ENCODE measurements at regions of chr15 and their contacts with region 1.

Region 1: GRCh38 chr15:60899322-60899966 is 329.7 kb downstream of the RORA start:
- DNase-seq: peak; percentile 80
- H3K4me3 Mint-ChIP-seq: peak overlapping the region; percentile 43
- H3K27ac Mint-ChIP-seq: peak overlapping the region; percentile 82
- H3K4me1 Mint-ChIP-seq: peaks cover 49% of the 10 kb centered on the region
- H3K27me3 Mint-ChIP-seq: peaks cover 4% of the 10 kb centered on the region

Region 2: GRCh38 chr15:60649845-60650548 is 249.4 kb before region 1 on chr15:
- intact Hi-C with region 1: loop called (anchors 1 kb)
- DNase-seq: peak; percentile 86
- H3K4me3 Mint-ChIP-seq: peak overlapping the region; percentile 75
- H3K27ac Mint-ChIP-seq: peak overlapping the region; percentile 86
- H3K4me1 Mint-ChIP-seq: peaks cover 44% of the 10 kb centered on the region
- H3K27me3 Mint-ChIP-seq: no peaks in the 10 kb centered on the region

Region 3: DNA sequence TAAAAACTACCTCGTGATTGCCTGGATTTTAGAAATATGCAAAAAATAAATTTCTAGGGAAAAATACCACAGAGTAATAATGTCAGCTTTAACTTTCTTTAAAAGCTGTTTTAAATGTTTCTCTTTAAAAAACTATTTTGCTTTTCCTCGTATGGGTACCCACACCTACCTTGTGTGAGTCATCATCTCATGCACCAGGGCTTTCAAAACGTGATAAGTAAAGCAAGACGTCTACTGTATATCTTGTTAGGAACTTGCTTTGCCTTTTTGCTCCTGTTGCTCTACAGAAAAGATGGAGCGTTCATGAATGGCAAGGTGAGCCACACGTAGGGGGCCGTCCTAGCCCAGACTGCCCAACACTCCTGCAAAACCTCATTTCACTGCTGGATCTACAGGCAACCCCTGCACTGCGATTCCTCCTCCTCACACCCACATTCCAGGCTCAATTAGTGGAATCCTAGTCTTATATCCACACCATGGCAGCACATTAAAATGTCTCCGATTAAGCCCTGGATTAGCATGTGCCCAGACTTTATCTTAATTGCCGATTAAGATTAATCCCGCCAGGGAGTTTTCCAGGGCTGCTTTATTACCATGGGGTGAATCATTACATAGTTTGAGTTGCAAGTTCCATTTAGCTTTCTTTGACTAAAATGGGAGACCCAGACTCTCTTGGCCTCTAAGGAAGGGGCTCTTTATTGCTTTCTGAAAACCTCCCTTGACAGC is 126.9 kb before region 1 on chr15:
- intact Hi-C with region 1: no loop called
- DNase-seq: no peak
- H3K4me3 Mint-ChIP-seq: no peak overlapping the region
- H3K27ac Mint-ChIP-seq: peak overlapping the region; percentile 25
- H3K4me1 Mint-ChIP-seq: peaks cover 23% of the 10 kb centered on the region
- H3K27me3 Mint-ChIP-seq: no peaks in the 10 kb centered on the region

Region 4: GRCh38 chr15:60798821-60799220 is 100.6 kb before region 1 on chr15:
- intact Hi-C with region 1: loop called (anchors 1 kb)
- DNase-seq: no peak
- H3K4me3 Mint-ChIP-seq: peak overlapping the region; percentile 36
- H3K27ac Mint-ChIP-seq: peak overlapping the region; percentile 83
- H3K4me1 Mint-ChIP-seq: peaks cover 49% of the 10 kb centered on the region
- H3K27me3 Mint-ChIP-seq: no peaks in the 10 kb centered on the region

Region 5: GRCh38 chr15:60840306-60840702 is 59.1 kb before region 1 on chr15:
- intact Hi-C with region 1: loop called (anchors 1 kb)
- DNase-seq: no peak
- H3K4me3 Mint-ChIP-seq: peak overlapping the region; percentile 63
- H3K27ac Mint-ChIP-seq: peak overlapping the region; percentile 35
- H3K4me1 Mint-ChIP-seq: peaks cover 67% of the 10 kb centered on the region
- H3K27me3 Mint-ChIP-seq: peaks cover 16% of the 10 kb centered on the region

Region 6: GRCh38 chr15:60916679-60917460 is 17.4 kb after region 1 on chr15:
- intact Hi-C with region 1: loop called (anchors 2 kb)
- DNase-seq: peak; percentile 95
- H3K4me3 Mint-ChIP-seq: no peak overlapping the region
- H3K27ac Mint-ChIP-seq: peak overlapping the region; percentile 75
- H3K4me1 Mint-ChIP-seq: peaks cover 27% of the 10 kb centered on the region
- H3K27me3 Mint-ChIP-seq: no peaks in the 10 kb centered on the region